ENCODE measurements at regions of chr4 and their contacts with region 1.

Region 1: DNA sequence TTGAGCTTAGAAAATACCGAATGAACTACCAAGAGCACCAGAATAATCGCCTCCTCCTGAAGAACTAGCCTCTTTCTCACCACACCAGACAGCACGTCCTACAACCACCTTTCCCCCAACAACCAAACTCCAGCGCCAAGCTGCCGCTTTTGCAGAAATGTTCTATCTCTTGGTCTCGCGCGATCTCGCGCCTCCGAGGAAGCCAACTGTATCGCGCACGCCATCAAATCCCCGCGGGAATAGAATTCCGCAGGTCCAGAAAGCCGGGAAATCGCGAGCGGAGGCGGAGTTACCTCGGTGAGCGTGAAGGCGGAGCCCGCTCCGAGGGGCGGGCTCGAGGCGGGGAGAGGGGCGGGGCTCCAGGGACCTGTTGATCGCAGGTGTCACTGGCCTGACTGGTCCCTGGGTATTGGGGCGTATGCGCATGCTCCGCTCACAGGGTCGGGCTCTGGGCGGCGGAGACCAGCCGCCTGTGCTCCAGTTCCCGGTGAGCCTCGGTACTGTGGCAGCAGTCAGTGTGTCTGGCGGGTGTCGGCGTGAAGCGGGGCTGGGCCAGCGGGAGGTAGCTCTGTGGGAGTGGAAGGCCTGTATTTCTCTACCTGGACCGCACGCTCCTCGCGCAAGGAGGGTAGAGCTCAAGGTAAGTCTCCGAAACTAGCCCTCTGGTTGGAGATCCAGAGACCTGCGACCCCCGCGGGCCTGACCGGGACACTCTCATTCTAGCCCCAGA is at the start of gene USP53:
- DNase-seq: peak; percentile 99
- H3K4me3 Mint-ChIP-seq: peak within 1 kb of the TSS; percentile 88
- H3K27ac Mint-ChIP-seq: peak within 1 kb of the TSS; percentile 96
- H3K4me1 Mint-ChIP-seq: peaks cover 39% of the 10 kb centered on the region
- H3K27me3 Mint-ChIP-seq: no peaks in the 10 kb centered on the region
- total RNA-seq, gene USP53: 9.5 to 10.5 TPM

Region 2: GRCh38 chr4:118278473-118279274 is 933.7 kb before region 1 on chr4:
- CTCF ChIA-PET with region 1: no interaction called
- POLR2A ChIA-PET with region 1: no interaction called
- intact Hi-C with region 1: loop called (anchors 10 kb)
- DNase-seq: peak; percentile 99
- H3K4me3 Mint-ChIP-seq: peak overlapping the region; percentile 87
- H3K27ac Mint-ChIP-seq: peak overlapping the region; percentile 97
- H3K4me1 Mint-ChIP-seq: peaks cover 46% of the 10 kb centered on the region
- H3K27me3 Mint-ChIP-seq: no peaks in the 10 kb centered on the region

Region 3: GRCh38 chr4:118911238-118911703 is 301.1 kb before region 1 on chr4:
- CTCF ChIA-PET with region 1: no interaction called
- POLR2A ChIA-PET with region 1: no interaction called
- intact Hi-C with region 1: no loop called
- DNase-seq: no peak
- H3K4me3 Mint-ChIP-seq: no peak overlapping the region
- H3K27ac Mint-ChIP-seq: no peak overlapping the region
- H3K4me1 Mint-ChIP-seq: no peaks in the 10 kb centered on the region
- H3K27me3 Mint-ChIP-seq: peaks cover 12% of the 10 kb centered on the region

Region 4: GRCh38 chr4:119041951-119042560 is 170.3 kb before region 1 on chr4:
- CTCF ChIA-PET with region 1: interaction called, 4 read pairs
- POLR2A ChIA-PET with region 1: interaction called, 5 read pairs
- intact Hi-C with region 1: loop called (anchors 1 kb)
- DNase-seq: peak; percentile 63
- H3K4me3 Mint-ChIP-seq: no peak overlapping the region
- H3K27ac Mint-ChIP-seq: no peak overlapping the region
- H3K4me1 Mint-ChIP-seq: peaks cover 11% of the 10 kb centered on the region
- H3K27me3 Mint-ChIP-seq: peaks cover 2% of the 10 kb centered on the region

Region 5: DNA sequence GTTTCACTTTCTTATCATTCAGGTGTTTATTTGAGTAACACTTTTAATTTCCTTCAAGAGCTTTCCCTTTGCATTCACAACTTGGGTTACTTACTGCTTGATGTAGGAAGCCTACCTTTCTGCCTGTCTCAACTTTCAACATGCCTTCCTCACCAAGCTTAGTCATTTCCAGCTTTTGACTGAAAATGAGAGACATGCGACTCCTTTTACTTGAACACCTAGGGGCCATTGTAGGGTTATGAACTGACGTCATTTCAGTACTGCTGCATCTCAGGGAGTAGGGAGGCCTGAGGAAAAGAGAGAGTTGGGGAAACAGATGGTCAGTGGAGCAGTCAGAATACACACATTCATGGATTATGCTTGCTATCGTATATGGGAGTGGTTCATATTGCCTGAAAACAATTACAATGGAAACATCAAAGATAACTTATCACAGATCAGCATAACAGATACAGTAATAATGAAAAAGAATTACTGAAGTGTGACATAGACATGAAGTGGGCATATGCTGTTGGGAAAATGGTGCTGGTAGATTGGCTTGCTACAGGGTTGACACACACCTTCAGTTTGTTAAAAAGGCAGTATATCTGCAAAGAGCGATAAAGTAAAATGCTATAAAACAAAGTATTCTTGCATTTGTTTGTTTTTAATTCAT is 25.8 kb after region 1 on chr4:
- CTCF ChIA-PET with region 1: interaction called, 14 read pairs
- POLR2A ChIA-PET with region 1: interaction called, 10 read pairs
- intact Hi-C with region 1: loop called (anchors 1 kb)
- DNase-seq: peak; percentile 54
- H3K4me3 Mint-ChIP-seq: no peak overlapping the region
- H3K27ac Mint-ChIP-seq: peak overlapping the region; percentile 69
- H3K4me1 Mint-ChIP-seq: peaks cover 33% of the 10 kb centered on the region
- H3K27me3 Mint-ChIP-seq: no peaks in the 10 kb centered on the region

Region 6: GRCh38 chr4:119286377-119287002 is 74.1 kb after region 1 on chr4:
- CTCF ChIA-PET with region 1: interaction called, 4 read pairs
- POLR2A ChIA-PET with region 1: interaction called, 4 read pairs
- intact Hi-C with region 1: loop called (anchors 1 kb)
- DNase-seq: peak; percentile 22
- H3K4me3 Mint-ChIP-seq: no peak overlapping the region
- H3K27ac Mint-ChIP-seq: no peak overlapping the region
- H3K4me1 Mint-ChIP-seq: peaks cover 16% of the 10 kb centered on the region
- H3K27me3 Mint-ChIP-seq: no peaks in the 10 kb centered on the region

Region 7: GRCh38 chr4:119628308-119629141 is 416.1 kb after region 1 on chr4 and contains the start of gene PDE5A:
- CTCF ChIA-PET with region 1: interaction called, 4 read pairs
- POLR2A ChIA-PET with region 1: no interaction called
- intact Hi-C with region 1: loop called (anchors 5 kb)
- DNase-seq: peak; percentile 85
- H3K4me3 Mint-ChIP-seq: peak within 1 kb of the TSS; percentile 80
- H3K27ac Mint-ChIP-seq: no peak within 1 kb of the TSS
- H3K4me1 Mint-ChIP-seq: peaks cover 15% of the 10 kb centered on the region
- H3K27me3 Mint-ChIP-seq: peaks cover 15% of the 10 kb centered on the region
- total RNA-seq, gene PDE5A: 0.64 to 0.87 TPM

Measured in activated CD4-positive, alpha-beta memory T cell treated with anti-CD3 and anti-CD28 coated beads for 36 hours (primary cell).